Activated T-helper 1 cell treated with anti-CD3 and anti-CD28 coated beads, Interleukin-12 subunit alpha, Interleukin-12 subunit beta, Interleukin-2, Interleukin-4 antibody, amounts not matched to agents 30 ng/mL and 10 ng/mL and 1 ng/mL, durations not matched to agents 14 hours and 24 hours and 36 hours (primary cell): ENCODE measurements at regions of chr7 and their contacts with region 1.

Region 1: GRCh38 chr7:141533149-141533949 is 17.9 kb upstream of the AGK start:
- DNase-seq: peak; percentile 34
- H3K4me3 Mint-ChIP-seq: no peak overlapping the region
- H3K27ac Mint-ChIP-seq: no peak overlapping the region
- H3K4me1 Mint-ChIP-seq: peaks cover 7% of the 10 kb centered on the region
- H3K27me3 Mint-ChIP-seq: peaks cover 20% of the 10 kb centered on the region

Region 2: GRCh38 chr7:140517546-140518369 is 1015.6 kb before region 1 on chr7:
- intact Hi-C with region 1: loop called (anchors 10 kb)
- DNase-seq: peak; percentile 38
- H3K4me3 Mint-ChIP-seq: no peak overlapping the region
- H3K27ac Mint-ChIP-seq: no peak overlapping the region
- H3K4me1 Mint-ChIP-seq: no peaks in the 10 kb centered on the region
- H3K27me3 Mint-ChIP-seq: peaks cover 11% of the 10 kb centered on the region

Region 3: DNA sequence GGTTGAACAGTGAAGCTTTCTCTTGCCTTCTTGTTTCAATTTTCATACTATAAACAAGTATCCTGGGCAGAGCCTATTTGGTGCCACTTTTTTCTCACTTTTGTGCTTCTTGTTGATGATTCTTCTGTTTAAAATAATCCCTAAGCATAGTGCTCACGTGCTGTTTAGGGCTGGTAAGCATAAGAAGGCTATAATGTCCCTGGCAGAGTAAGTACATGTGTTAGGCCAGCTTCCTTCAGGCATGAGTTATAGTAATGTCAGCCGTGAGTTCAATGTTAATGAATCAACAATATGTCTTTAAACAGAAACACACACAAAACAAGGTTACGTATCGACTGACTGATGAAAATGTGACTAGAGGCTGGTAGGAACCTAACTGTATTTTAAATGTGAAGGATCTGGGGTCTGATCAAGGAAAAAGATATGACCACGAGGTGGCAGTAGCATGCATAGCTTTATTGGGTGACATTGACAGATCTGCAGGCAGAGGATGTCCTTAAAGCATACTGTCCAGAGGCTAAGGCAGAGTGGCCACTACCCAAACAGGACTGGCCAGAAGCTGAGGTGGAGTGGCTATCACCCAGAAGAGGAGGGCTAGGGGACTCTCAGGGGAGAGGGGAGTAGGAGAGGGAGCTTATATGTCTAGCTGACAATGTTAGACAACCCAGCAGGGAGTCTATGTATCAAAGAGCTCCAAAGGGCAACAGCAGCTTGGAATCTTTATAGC is 722.4 kb before region 1 on chr7:
- intact Hi-C with region 1: loop called (anchors 1 kb)
- DNase-seq: peak; percentile 53
- H3K4me3 Mint-ChIP-seq: no peak overlapping the region
- H3K27ac Mint-ChIP-seq: no peak overlapping the region
- H3K4me1 Mint-ChIP-seq: no peaks in the 10 kb centered on the region
- H3K27me3 Mint-ChIP-seq: peaks cover 2% of the 10 kb centered on the region

Region 4: GRCh38 chr7:141072548-141073172 is 460.7 kb before region 1 on chr7:
- intact Hi-C with region 1: loop called (anchors 1 kb)
- DNase-seq: peak; percentile 40
- H3K4me3 Mint-ChIP-seq: peak overlapping the region; percentile 79
- H3K27ac Mint-ChIP-seq: no peak overlapping the region
- H3K4me1 Mint-ChIP-seq: peaks cover 36% of the 10 kb centered on the region
- H3K27me3 Mint-ChIP-seq: peaks cover 39% of the 10 kb centered on the region

Region 5: GRCh38 chr7:141551094-141551781 is 17.9 kb after region 1 on chr7 and contains the start of gene AGK:
- intact Hi-C with region 1: loop called (anchors 1 kb)
- DNase-seq: peak; percentile 79
- H3K4me3 Mint-ChIP-seq: peak within 1 kb of the TSS; percentile 91
- H3K27ac Mint-ChIP-seq: peak within 1 kb of the TSS; percentile 97
- H3K4me1 Mint-ChIP-seq: peaks cover 50% of the 10 kb centered on the region
- H3K27me3 Mint-ChIP-seq: no peaks in the 10 kb centered on the region
- total RNA-seq, gene AGK: 174 and 179 TPM in 2 replicates

Region 6: GRCh38 chr7:141609566-141609965 is 76.2 kb after region 1 on chr7:
- intact Hi-C with region 1: no loop called
- DNase-seq: no peak
- H3K4me3 Mint-ChIP-seq: no peak overlapping the region
- H3K27ac Mint-ChIP-seq: no peak overlapping the region
- H3K4me1 Mint-ChIP-seq: peaks cover 5% of the 10 kb centered on the region
- H3K27me3 Mint-ChIP-seq: no peaks in the 10 kb centered on the region

Region 7: GRCh38 chr7:141945356-141945755 is 412.0 kb after region 1 on chr7:
- intact Hi-C with region 1: no loop called
- DNase-seq: no peak
- H3K4me3 Mint-ChIP-seq: no peak overlapping the region
- H3K27ac Mint-ChIP-seq: no peak overlapping the region
- H3K4me1 Mint-ChIP-seq: no peaks in the 10 kb centered on the region
- H3K27me3 Mint-ChIP-seq: no peaks in the 10 kb centered on the region